ENCODE measurements at regions of chr1 and their contacts with region 1.

Region 1: DNA sequence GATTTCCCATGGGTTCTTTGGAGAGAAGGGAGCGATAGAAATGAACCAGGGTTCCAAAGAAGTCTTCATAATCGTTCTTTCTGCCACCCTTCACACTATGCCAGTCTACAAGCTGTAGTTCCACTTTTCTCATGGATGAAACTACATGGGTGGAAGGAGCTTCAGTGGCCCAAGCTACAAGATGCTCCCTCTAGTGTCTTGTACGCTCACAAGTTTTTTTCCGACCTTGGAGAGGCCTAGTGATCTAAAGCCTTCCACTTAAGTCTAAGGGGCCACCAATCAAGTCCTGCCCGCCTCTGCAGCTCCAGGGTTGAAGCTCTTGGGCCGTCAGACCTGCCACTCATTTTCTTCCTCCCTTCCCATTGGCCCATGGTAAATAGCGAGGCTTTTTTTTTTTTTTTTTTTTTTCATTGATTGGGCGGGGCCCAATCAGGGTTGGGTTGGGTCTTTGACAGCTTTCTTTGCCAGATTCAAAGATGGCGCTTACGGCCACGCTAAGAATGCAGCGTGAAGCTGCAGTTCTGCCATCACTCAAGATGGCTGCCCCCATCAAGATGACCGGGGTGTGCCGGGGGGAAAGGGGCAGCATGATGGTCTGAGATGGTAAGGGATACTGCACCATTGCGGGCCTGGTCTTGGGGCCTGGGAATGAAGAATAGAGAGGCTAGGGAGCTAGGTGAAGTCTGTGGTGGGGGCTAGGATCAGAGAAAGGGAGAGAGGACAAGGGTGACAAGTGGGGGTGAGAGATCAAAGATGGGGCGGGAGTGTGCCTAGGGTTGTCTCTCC is at the start of gene TOMM40L:
- DNase-seq: peak; percentile 96
- ATAC-seq: peak; percentile 96
- H3K4me3 Mint-ChIP-seq: peak within 1 kb of the TSS; percentile 98
- H3K27ac Mint-ChIP-seq: peak within 1 kb of the TSS; percentile 95
- H3K4me1 Mint-ChIP-seq: peaks cover 32% of the 10 kb centered on the region
- H3K27me3 Mint-ChIP-seq: no peaks in the 10 kb centered on the region
- CTCF ChIP-seq: peak; percentile 62
- total RNA-seq, gene TOMM40L: 11.6 to 12.1 TPM

Region 2: DNA sequence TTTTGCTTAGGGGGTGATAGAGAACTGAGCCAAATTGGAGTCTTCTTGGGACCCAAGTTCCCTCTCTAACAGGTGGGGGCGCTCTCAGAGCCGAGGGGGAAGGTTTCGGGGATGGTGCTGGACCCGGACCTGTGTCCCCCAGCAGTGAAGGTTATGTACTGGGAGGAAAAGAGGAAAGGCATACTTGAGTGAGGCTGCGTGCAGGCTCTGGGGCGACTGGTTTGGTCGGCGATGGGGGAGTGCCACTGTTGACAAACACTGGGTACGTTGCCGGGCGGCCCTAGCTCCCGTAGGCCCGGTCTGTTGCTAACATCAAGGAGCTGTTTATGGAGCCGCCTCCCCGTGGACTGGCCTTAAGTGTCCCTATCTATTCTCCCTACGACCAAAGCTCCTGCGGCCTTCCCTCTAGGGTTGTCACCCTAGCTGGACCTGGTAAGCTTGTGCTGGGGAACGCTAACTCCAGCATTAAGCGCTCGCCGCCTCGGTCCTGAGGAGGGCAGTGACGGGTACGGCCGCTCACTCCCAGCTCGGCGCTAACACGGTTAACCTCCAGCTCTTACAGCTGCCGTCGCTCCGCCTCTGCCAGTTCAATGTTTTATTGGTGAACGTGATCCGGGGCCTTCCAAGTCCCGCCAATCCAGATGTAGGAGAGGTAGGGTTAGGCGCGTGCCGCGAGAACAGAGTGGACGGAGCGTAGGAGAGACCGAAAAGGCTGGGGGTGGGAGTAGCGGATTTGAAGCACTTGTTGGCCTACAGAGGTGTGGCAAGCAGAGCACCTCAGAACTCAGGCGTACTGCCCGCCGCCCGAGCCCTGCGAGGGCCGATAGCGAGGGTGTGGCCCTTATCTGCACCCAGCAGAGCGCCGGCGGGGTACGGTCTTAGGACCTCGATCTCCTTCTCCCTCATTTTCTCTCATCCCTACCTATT is 59.7 kb before region 1 on chr1 and contains the start of gene PPOX:
- CTCF ChIA-PET with region 1: interaction called, 36 read pairs
- POLR2A ChIA-PET with region 1: interaction called, 4 read pairs
- intact Hi-C with region 1: no loop called
- DNase-seq: peak; percentile 97
- ATAC-seq: peak; percentile 94
- H3K4me3 Mint-ChIP-seq: peak within 1 kb of the TSS; percentile 82
- H3K27ac Mint-ChIP-seq: peak within 1 kb of the TSS; percentile 95
- H3K4me1 Mint-ChIP-seq: peaks cover 46% of the 10 kb centered on the region
- H3K27me3 Mint-ChIP-seq: no peaks in the 10 kb centered on the region
- CTCF ChIP-seq: peak; percentile 69
- total RNA-seq, gene PPOX: 24.4 to 24.9 TPM

Region 3: GRCh38 chr1:161192476-161193465 is 33.0 kb before region 1 on chr1:
- CTCF ChIA-PET with region 1: interaction called, 306 read pairs
- POLR2A ChIA-PET with region 1: interaction called, 4 read pairs
- intact Hi-C with region 1: no loop called
- DNase-seq: peak; percentile 81
- ATAC-seq: peak; percentile 95
- H3K4me3 Mint-ChIP-seq: no peak overlapping the region
- H3K27ac Mint-ChIP-seq: peak overlapping the region; percentile 78
- H3K4me1 Mint-ChIP-seq: peaks cover 23% of the 10 kb centered on the region
- H3K27me3 Mint-ChIP-seq: no peaks in the 10 kb centered on the region
- CTCF ChIP-seq: peak; percentile 92

Region 4: GRCh38 chr1:161238039-161238473 is 12.3 kb after region 1 on chr1 and contains the start of gene NR1I3:
- CTCF ChIA-PET with region 1: interaction called, 29 read pairs
- POLR2A ChIA-PET with region 1: interaction called, 4 read pairs
- intact Hi-C with region 1: no loop called
- DNase-seq: no peak
- ATAC-seq: no peak
- H3K4me3 Mint-ChIP-seq: no peak within 1 kb of the TSS
- H3K27ac Mint-ChIP-seq: no peak within 1 kb of the TSS
- H3K4me1 Mint-ChIP-seq: no peaks in the 10 kb centered on the region
- H3K27me3 Mint-ChIP-seq: peaks cover 11% of the 10 kb centered on the region
- CTCF ChIP-seq: no peak
- total RNA-seq, gene NR1I3: not detected

Region 5: DNA sequence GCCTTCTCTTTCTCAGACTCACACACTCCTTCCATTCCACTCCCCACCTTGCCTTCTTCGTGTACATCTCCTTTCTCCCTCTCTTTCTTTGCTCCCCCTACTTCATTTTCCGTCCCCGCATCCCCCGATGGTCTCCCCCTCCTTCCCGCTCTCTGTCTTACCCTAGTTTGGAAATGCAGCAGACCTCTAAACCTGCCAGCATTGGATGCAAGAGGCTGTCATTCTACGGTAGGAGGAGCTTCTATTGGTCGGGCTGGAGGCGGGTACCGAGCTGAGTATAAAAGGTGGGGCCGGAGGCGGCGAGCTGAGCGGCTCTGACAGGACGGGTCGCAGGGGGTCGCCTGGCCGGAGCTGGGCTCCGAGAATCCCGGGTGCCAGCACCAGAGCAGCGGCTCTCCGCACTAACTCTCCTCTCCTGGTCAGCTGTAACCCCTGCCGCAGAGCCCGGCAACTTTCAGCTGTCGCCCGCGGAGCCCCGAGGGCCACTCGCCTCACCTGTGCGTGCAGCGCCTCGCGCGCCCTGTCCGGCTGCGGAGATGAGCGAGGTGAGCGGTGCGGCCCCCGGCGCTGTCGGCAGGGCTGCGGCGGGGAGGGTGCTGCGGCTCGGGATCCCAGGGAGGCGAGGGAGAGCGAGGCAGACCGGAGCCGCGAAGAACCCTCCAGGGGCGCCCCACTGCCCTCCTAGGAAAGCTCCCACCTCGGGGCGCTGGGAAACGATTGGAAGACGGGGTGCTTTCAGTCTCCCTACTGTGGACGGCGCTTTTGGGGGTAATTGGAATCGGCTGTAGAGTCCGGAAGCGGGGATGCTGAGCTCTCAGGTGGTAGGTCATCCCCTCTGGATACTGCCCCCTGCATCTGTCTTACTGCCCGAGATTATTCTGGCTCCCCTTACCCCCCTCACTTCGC is 33.0 kb after region 1 on chr1 and contains the start of gene PCP4L1:
- CTCF ChIA-PET with region 1: interaction called, 10 read pairs
- POLR2A ChIA-PET with region 1: interaction called, 5 read pairs
- intact Hi-C with region 1: no loop called
- DNase-seq: peak; percentile 58
- ATAC-seq: peak; percentile 97
- H3K4me3 Mint-ChIP-seq: peak within 1 kb of the TSS; percentile 34
- H3K27ac Mint-ChIP-seq: no peak within 1 kb of the TSS
- H3K4me1 Mint-ChIP-seq: peaks cover 8% of the 10 kb centered on the region
- H3K27me3 Mint-ChIP-seq: peaks cover 48% of the 10 kb centered on the region
- CTCF ChIP-seq: no peak
- total RNA-seq, gene PCP4L1: 0.18 TPM in 1 of 2 experiments, not detected in the other

Region 6: GRCh38 chr1:161314201-161314981 is 88.7 kb after region 1 on chr1 and contains the start of gene SDHC:
- CTCF ChIA-PET with region 1: interaction called, 19 read pairs
- POLR2A ChIA-PET with region 1: no interaction called
- intact Hi-C with region 1: no loop called
- DNase-seq: peak; percentile 92
- ATAC-seq: peak; percentile 98
- H3K4me3 Mint-ChIP-seq: peak within 1 kb of the TSS; percentile 90
- H3K27ac Mint-ChIP-seq: peak within 1 kb of the TSS; percentile 95
- H3K4me1 Mint-ChIP-seq: peaks cover 13% of the 10 kb centered on the region
- H3K27me3 Mint-ChIP-seq: no peaks in the 10 kb centered on the region
- CTCF ChIP-seq: no peak
- total RNA-seq, gene SDHC: 160 to 175 TPM

Region 7: DNA sequence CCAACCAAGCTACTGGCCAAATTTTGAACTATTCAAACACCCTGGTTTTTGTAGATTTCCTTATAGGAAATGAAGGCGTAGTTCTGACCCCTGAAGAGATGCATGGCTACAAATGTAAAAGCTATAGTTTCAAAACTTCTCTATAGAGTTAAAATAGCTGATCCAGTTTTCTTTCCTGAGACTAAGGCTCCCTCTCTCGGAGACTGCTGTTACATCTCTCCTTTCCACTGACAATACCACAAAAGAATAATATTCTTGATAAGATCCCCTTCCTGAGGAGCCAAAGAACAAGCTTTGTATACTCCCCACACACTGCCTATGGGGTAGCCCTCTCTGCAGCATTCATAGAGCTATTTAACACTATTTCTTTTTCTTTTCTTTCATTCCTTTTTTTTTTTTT is 148.6 kb after region 1 on chr1:
- CTCF ChIA-PET with region 1: interaction called, 10 read pairs
- POLR2A ChIA-PET with region 1: interaction called, 4 read pairs
- intact Hi-C with region 1: no loop called
- DNase-seq: no peak
- ATAC-seq: no peak
- H3K4me3 Mint-ChIP-seq: no peak overlapping the region
- H3K27ac Mint-ChIP-seq: no peak overlapping the region
- H3K4me1 Mint-ChIP-seq: no peaks in the 10 kb centered on the region
- H3K27me3 Mint-ChIP-seq: no peaks in the 10 kb centered on the region
- CTCF ChIP-seq: no peak

Region 8: GRCh38 chr1:161427733-161428516 is 202.2 kb after region 1 on chr1:
- CTCF ChIA-PET with region 1: no interaction called
- POLR2A ChIA-PET with region 1: no interaction called
- intact Hi-C with region 1: no loop called
- DNase-seq: peak; percentile 56
- ATAC-seq: peak; percentile 69
- H3K4me3 Mint-ChIP-seq: peak overlapping the region; percentile 60
- H3K27ac Mint-ChIP-seq: no peak overlapping the region
- H3K4me1 Mint-ChIP-seq: peaks cover 8% of the 10 kb centered on the region
- H3K27me3 Mint-ChIP-seq: peaks cover 30% of the 10 kb centered on the region
- CTCF ChIP-seq: no peak